IMR-90 (cell line): ENCODE measurements at regions of chr11 and their contacts with region 1.

Region 1: DNA sequence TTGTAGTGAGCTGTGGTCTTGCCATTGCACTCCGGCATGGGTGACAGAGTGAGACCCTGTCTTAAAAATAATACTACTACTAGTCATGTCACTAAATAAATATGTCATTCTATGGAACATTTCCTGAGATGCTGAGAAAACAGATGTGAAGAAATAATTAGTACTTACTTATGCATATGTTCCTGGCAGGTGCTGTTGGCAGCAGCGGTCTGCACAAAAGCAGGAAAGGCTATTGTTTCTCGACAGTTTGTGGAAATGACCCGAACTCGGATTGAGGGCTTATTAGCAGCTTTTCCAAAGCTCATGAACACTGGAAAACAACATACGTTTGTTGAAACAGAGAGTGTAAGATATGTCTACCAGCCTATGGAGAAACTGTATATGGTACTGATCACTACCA is 8.8 kb downstream of the ARCN1 start:
- DNase-seq: no peak
- ATAC-seq: no peak
- H3K4me3 ChIP-seq: no peak overlapping the region
- H3K27ac ChIP-seq: no peak overlapping the region
- H3K4me1 ChIP-seq: peaks cover 5% of the 10 kb centered on the region
- H3K27me3 ChIP-seq: no peaks in the 10 kb centered on the region
- CTCF ChIP-seq: no peak
- POLR2A ChIP-seq: no peak
- RAD21 ChIP-seq: no peak

Region 2: DNA sequence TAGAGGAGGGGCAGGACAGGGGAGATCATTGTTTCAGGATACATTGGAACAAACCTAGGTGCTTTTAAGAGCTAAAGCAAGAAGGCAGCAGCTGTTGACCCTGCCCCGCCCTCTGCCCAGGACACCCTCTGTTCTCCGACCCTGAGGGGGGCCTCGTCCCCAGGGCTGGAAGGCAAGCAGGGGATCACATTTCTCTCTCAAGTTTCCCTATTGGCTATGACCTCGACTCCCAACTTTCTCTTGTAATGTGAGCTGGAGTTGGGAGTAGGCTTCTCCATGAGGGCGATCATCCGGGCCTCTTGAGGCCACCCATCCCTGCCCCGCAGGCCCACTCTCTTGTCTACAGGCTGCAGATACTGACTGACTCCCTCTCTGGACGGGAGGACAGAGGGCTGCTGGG is 821.8 kb before region 1 on chr11:
- CTCF ChIA-PET with region 1: no interaction called
- POLR2A ChIA-PET with region 1: no interaction called
- dilution Hi-C with region 1: no loop called
- in situ Hi-C with region 1: no loop called
- intact Hi-C with region 1: no loop called
- DNase-seq: no peak
- ATAC-seq: no peak
- H3K4me3 ChIP-seq: no peak overlapping the region
- H3K27ac ChIP-seq: no peak overlapping the region
- H3K4me1 ChIP-seq: no peaks in the 10 kb centered on the region
- H3K27me3 ChIP-seq: peaks cover 8% of the 10 kb centered on the region; the same call in 1 of the 2 replicates
- CTCF ChIP-seq: no peak
- POLR2A ChIP-seq: no peak
- RAD21 ChIP-seq: no peak

Region 3: DNA sequence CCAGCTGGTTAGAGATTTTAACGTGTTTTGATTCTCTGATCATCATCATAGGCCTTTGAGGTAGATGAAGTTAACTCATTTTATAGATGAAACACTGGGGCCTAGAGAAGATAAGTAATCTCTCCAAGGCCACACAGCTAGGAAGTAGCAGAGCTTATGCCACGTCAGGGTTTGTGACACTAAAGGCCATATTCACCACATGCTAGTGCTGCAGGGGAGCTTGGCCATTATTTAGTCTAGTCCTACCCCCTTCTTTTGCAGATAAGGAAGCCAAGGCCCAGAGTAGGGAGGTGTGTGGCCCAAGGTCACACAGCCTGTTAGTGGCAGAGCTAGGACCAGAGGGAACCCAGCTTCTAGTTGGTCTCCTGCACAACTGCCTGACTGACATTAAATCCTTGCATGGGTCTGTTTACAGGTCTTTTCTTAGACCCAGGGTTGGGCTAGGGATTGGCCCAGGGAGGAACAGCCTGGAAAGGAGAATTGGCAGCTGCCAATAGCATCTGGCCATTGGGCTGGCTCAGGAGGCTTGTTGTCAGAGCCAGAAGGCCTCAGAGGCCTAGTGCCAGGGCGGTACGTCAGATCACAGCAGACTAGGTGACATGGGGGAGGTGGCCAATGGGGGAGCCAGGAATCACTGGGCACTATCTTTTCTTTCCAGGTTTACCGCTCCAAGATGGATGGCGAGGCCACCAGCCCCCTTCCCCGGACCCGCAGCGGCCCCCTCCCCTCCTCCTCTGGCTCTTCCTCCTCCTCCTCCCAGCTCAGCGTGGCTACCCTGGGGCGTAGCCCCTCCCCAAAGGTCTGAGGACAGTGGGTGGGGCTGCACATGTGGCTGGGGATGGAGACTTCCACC is 62.3 kb after region 1 on chr11:
- CTCF ChIA-PET with region 1: no interaction called
- POLR2A ChIA-PET with region 1: interaction called, 14 read pairs
- dilution Hi-C with region 1: no loop called
- in situ Hi-C with region 1: no loop called
- intact Hi-C with region 1: no loop called
- DNase-seq: no peak
- ATAC-seq: no peak
- H3K4me3 ChIP-seq: no peak overlapping the region
- H3K27ac ChIP-seq: no peak overlapping the region
- H3K4me1 ChIP-seq: 0 out of 2 replicates have a peak, but pooled peaks cover 1% of the 10 kb centered on the region
- H3K27me3 ChIP-seq: no peaks in the 10 kb centered on the region
- CTCF ChIP-seq: no peak
- POLR2A ChIP-seq: no peak
- RAD21 ChIP-seq: no peak